ENCODE measurements at regions of chr20 and their contacts with region 1.

Region 1: GRCh38 chr20:4014031-4014474 is 1.3 kb downstream of the RNF24 start:
- DNase-seq: no peak
- ATAC-seq: peak; percentile 61
- H3K4me3 ChIP-seq: peak overlapping the region; percentile 55 to 81
- H3K27ac ChIP-seq: peak overlapping the region; percentile 45 to 50
- H3K4me1 ChIP-seq: peaks cover 0 to 5% of the 10 kb centered on the region in 2 donors
- H3K27me3 ChIP-seq: no peaks in the 10 kb centered on the region

Region 2: GRCh38 chr20:3846740-3847428 is 167.2 kb before region 1 on chr20 and contains the start of gene MAVS:
- intact Hi-C with region 1: no loop called
- DNase-seq: peak; percentile 92 to 96
- ATAC-seq: peak; percentile 97
- H3K4me3 ChIP-seq: peak within 1 kb of the TSS; percentile 22 to 92
- H3K27ac ChIP-seq: peak within 1 kb of the TSS; percentile 71 to 77
- H3K4me1 ChIP-seq: no peaks in the 10 kb centered on the region
- H3K27me3 ChIP-seq: no peaks in the 10 kb centered on the region
- total RNA-seq, gene MAVS: 33.4 to 36.1 TPM

Region 3: DNA sequence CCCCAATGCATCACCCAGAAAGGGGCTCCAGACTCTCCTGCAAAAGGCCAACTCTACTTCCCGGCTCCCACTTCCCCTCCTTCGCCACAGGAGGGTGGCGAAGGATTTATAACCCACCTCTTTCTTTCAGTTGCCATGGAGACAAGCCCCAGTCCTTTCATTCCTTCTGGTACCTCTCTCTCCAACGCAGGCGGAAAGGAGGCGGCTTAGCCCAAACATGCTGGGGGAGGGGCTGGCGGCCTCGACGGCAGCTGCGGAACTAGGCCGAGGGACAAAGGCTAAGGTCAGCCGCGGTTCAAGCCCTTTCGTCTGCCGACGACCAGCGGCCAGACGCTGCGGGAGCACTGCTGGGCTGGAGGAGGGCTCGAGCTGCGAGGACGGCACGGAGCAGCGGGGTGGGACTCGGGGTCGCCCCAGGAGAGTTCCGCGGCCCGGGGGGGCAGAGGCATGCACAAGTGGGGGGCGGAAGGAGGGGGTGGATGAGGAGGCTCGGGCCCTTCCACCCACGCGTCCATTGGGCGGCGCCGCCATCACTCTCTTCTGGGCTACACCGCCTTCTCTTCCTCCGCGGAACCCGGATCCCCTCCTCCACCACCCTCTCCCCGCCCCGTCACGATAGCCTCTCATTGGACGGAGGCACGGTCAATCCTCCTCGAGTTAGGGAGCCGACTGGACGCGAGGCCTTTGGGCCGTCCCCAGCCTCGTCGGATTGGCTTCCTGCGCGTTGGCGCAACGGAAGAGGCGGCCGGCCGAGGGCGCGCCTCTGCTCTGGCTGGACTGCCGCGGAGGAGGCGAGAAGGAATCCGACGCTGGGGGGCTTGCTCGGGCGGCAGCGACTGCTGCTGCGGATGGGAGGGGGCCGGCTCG is 125.2 kb before region 1 on chr20 and contains the start of gene PANK2:
- intact Hi-C with region 1: loop called (anchors 5 to 10 kb)
- DNase-seq: peak; percentile 100
- ATAC-seq: peak; percentile 98
- H3K4me3 ChIP-seq: peak within 1 kb of the TSS; percentile 88 to 89
- H3K27ac ChIP-seq: peak within 1 kb of the TSS; percentile 85 to 86
- H3K4me1 ChIP-seq: no peaks in the 10 kb centered on the region
- H3K27me3 ChIP-seq: no peaks in the 10 kb centered on the region
- total RNA-seq, gene PANK2: 45.7 to 53.2 TPM

Region 4: DNA sequence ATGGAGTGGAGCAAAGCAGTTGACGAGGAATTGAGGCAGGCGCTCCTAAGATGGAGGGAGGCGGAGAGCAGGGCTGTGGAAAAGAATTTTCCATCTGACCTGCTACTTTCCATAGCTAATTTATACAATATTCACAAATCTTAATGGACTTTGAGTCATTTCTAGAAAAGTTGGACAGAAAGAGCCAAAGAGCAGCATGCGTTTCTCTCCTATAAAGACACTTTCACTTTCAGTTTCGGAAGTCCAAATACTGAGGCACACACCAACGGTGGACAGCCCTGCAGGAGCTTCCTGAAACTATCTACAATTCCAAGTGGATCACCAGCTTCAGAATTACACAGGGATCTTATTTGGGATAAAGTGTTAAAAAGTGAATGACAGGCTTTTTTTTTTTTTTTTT is 81.4 kb before region 1 on chr20:
- intact Hi-C with region 1: loop called (anchors 5 to 10 kb)
- DNase-seq: no peak
- ATAC-seq: no peak
- H3K4me3 ChIP-seq: peak overlapping the region in 1 of 2 donors; percentile 36
- H3K27ac ChIP-seq: peak overlapping the region; percentile 64 to 68
- H3K4me1 ChIP-seq: peaks cover 7 to 10% of the 10 kb centered on the region in 2 donors
- H3K27me3 ChIP-seq: no peaks in the 10 kb centered on the region

Region 5: GRCh38 chr20:4064144-4064909 is 50.3 kb after region 1 on chr20:
- intact Hi-C with region 1: loop called in 1 of 2 experiments (anchors 5 kb)
- DNase-seq: peak; percentile 95 to 97
- ATAC-seq: peak; percentile 91
- H3K4me3 ChIP-seq: no peak overlapping the region
- H3K27ac ChIP-seq: peak overlapping the region; percentile 62 to 64
- H3K4me1 ChIP-seq: peaks cover 0 to 12% of the 10 kb centered on the region in 2 donors
- H3K27me3 ChIP-seq: no peaks in the 10 kb centered on the region

Region 6: GRCh38 chr20:4082406-4083097 is 68.5 kb after region 1 on chr20:
- intact Hi-C with region 1: loop called (anchors 1 to 5 kb)
- DNase-seq: peak in 1 of 2 donors; percentile 69
- ATAC-seq: peak; percentile 26
- H3K4me3 ChIP-seq: no peak overlapping the region
- H3K27ac ChIP-seq: peak overlapping the region; percentile 70 to 92
- H3K4me1 ChIP-seq: peaks cover 5% of the 10 kb centered on the region in 2 donors
- H3K27me3 ChIP-seq: no peaks in the 10 kb centered on the region